A673 (cell line): ENCODE measurements at regions of chr6 and their contacts with region 1.

Region 1: DNA sequence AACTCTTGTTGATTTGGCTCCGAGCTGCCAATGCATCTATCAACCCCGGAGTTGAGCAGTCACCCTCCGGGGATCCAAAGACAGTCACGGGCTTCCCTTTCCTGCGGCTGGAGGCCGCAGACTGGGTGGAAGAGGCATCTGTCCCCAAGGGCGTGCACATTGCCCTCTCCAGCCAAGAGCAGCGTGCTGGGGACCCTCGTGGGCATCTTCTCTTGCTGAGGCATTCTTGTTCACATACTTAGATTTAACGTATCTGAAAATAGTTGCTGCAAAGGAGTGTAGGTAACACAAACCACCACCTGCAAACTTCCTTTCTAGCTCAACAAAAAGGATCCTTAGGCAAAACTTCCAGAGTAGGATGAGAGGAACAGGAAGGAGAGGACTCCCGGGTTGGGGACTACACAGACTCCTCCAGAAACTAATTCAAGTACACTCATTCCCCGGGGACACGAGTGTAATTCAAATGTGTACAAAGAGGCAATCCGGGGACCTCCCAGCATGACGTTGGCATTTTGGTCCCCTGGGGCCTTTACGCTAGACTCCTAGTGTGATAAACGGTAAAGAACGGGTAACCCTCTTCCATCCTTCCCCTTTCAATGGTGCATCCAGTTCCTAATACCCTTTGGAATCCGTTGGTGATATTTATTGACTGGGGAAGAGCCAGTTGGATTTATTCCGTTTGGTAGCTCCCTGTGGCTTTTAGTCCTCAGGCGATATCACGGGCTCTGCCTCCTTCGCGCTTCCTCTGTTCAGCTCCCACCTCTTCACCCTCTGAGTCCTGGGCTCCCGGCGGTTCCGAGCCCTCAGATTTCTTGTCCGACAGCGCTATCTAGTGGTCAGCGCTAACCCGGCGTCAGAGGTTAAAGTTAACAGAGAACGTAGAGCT is 2.7 kb upstream of the COL12A1 start:
- DNase-seq: peak; percentile 91
- H3K4me3 ChIP-seq: peak overlapping the region; percentile 16
- H3K27ac ChIP-seq: no peak overlapping the region
- H3K4me1 ChIP-seq: peaks cover 38% of the 10 kb centered on the region
- H3K27me3 ChIP-seq: peaks cover 22% of the 10 kb centered on the region
- CTCF ChIP-seq: peak; percentile 95

Region 2: GRCh38 chr6:73675466-73676098 is 1533.0 kb before region 1 on chr6:
- CTCF ChIA-PET with region 1: no interaction called
- POLR2A ChIA-PET with region 1: no interaction called
- intact Hi-C with region 1: loop called (anchors 10 kb)
- DNase-seq: peak; percentile 76
- H3K4me3 ChIP-seq: no peak overlapping the region
- H3K27ac ChIP-seq: no peak overlapping the region
- H3K4me1 ChIP-seq: no peaks in the 10 kb centered on the region
- H3K27me3 ChIP-seq: no peaks in the 10 kb centered on the region
- CTCF ChIP-seq: peak; percentile 88

Region 3: DNA sequence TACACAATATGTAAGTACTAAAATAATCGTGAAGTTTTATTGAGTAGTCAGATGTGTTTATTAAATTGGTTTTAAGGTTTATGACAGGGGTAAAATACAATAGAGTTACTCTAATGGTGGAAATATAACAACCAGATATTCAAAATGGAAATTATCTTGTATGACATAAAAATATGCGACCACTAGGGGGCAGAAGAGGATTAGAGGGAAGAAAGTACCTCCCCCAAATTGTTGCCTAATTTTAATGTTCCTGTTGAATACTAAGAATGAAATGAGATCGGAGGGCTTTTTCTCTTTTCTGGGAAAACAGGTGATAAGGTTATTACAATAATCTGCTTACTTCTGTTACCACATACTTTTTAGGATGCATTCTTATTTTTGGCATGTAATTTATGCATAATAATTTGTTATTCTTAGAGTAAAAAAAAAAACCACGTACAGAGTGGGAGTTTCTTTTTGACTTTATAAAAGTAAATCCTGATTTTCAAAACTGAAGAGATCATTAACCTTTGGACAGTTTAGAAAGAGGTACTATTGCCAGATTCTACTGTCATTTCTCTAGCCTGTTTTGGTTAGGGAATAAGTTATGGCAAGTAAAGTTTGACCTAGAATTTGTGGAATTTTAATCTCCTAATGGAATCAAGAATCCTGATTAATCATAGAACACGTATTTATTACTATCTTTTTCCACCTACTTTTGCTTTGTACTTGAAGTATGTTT is 1353.4 kb before region 1 on chr6:
- CTCF ChIA-PET with region 1: interaction called, 7 read pairs
- POLR2A ChIA-PET with region 1: no interaction called
- intact Hi-C with region 1: loop called (anchors 2 kb)
- DNase-seq: peak; percentile 83
- H3K4me3 ChIP-seq: no peak overlapping the region
- H3K27ac ChIP-seq: no peak overlapping the region
- H3K4me1 ChIP-seq: peaks cover 8% of the 10 kb centered on the region
- H3K27me3 ChIP-seq: no peaks in the 10 kb centered on the region
- CTCF ChIP-seq: peak; percentile 79

Region 4: GRCh38 chr6:74091136-74091793 is 1117.3 kb before region 1 on chr6:
- CTCF ChIA-PET with region 1: interaction called, 10 read pairs
- POLR2A ChIA-PET with region 1: no interaction called
- intact Hi-C with region 1: loop called (anchors 2 kb)
- DNase-seq: peak; percentile 75
- H3K4me3 ChIP-seq: no peak overlapping the region
- H3K27ac ChIP-seq: no peak overlapping the region
- H3K4me1 ChIP-seq: no peaks in the 10 kb centered on the region
- H3K27me3 ChIP-seq: no peaks in the 10 kb centered on the region
- CTCF ChIP-seq: peak; percentile 81

Region 5: GRCh38 chr6:74409447-74409846 is 799.1 kb before region 1 on chr6:
- CTCF ChIA-PET with region 1: interaction called, 4 read pairs
- POLR2A ChIA-PET with region 1: no interaction called
- intact Hi-C with region 1: loop called (anchors 2 kb)
- DNase-seq: peak; percentile 44
- H3K4me3 ChIP-seq: no peak overlapping the region
- H3K27ac ChIP-seq: no peak overlapping the region
- H3K4me1 ChIP-seq: no peaks in the 10 kb centered on the region
- H3K27me3 ChIP-seq: no peaks in the 10 kb centered on the region
- CTCF ChIP-seq: peak; percentile 51; the same call in 1 of the 2 replicates

Region 6: GRCh38 chr6:74557236-74557635 is 651.3 kb before region 1 on chr6:
- CTCF ChIA-PET with region 1: no interaction called
- POLR2A ChIA-PET with region 1: no interaction called
- intact Hi-C with region 1: no loop called
- DNase-seq: no peak
- H3K4me3 ChIP-seq: no peak overlapping the region
- H3K27ac ChIP-seq: no peak overlapping the region
- H3K4me1 ChIP-seq: no peaks in the 10 kb centered on the region
- H3K27me3 ChIP-seq: no peaks in the 10 kb centered on the region
- CTCF ChIP-seq: no peak

Region 7: GRCh38 chr6:74690365-74690764 is 518.2 kb before region 1 on chr6:
- CTCF ChIA-PET with region 1: no interaction called
- POLR2A ChIA-PET with region 1: no interaction called
- intact Hi-C with region 1: no loop called
- DNase-seq: no peak
- H3K4me3 ChIP-seq: no peak overlapping the region
- H3K27ac ChIP-seq: no peak overlapping the region
- H3K4me1 ChIP-seq: no peaks in the 10 kb centered on the region
- H3K27me3 ChIP-seq: no peaks in the 10 kb centered on the region
- CTCF ChIP-seq: no peak

Region 8: GRCh38 chr6:74749211-74750142 is 459.1 kb before region 1 on chr6:
- CTCF ChIA-PET with region 1: no interaction called
- POLR2A ChIA-PET with region 1: no interaction called
- intact Hi-C with region 1: loop called (anchors 10 kb)
- DNase-seq: no peak
- H3K4me3 ChIP-seq: no peak overlapping the region
- H3K27ac ChIP-seq: no peak overlapping the region
- H3K4me1 ChIP-seq: no peaks in the 10 kb centered on the region
- H3K27me3 ChIP-seq: no peaks in the 10 kb centered on the region
- CTCF ChIP-seq: no peak

Region 9: DNA sequence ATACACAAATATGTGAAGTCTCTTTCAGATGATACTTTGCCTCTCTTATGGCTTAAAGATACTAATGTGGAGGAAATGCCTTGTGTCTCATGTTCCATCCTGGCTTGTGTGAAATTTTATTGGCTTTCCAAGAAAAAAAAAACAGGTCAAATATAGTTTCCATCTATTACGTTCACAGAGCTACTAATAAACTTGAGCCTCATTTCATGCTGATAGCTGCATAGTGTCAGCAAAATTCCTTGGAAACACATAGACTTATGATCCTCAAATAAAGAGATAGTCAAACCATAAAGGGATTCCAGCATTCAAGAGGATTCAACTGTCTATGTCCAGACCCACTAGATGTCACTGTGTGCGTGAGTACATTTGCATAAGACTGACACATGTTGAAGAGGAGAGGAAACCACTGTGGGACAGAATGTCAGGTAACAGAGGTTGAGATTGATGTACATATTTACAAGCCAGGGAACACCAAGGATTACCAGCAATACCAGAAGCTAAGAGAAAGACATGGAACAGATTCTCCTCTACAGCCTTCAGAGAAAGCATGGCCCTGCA is 269.3 kb before region 1 on chr6:
- CTCF ChIA-PET with region 1: interaction called, 4 read pairs
- POLR2A ChIA-PET with region 1: no interaction called
- intact Hi-C with region 1: loop called (anchors 5 kb)
- DNase-seq: peak; percentile 26
- H3K4me3 ChIP-seq: no peak overlapping the region
- H3K27ac ChIP-seq: no peak overlapping the region
- H3K4me1 ChIP-seq: no peaks in the 10 kb centered on the region
- H3K27me3 ChIP-seq: no peaks in the 10 kb centered on the region
- CTCF ChIP-seq: peak; percentile 40; the same call in 1 of the 2 replicates

Region 10: DNA sequence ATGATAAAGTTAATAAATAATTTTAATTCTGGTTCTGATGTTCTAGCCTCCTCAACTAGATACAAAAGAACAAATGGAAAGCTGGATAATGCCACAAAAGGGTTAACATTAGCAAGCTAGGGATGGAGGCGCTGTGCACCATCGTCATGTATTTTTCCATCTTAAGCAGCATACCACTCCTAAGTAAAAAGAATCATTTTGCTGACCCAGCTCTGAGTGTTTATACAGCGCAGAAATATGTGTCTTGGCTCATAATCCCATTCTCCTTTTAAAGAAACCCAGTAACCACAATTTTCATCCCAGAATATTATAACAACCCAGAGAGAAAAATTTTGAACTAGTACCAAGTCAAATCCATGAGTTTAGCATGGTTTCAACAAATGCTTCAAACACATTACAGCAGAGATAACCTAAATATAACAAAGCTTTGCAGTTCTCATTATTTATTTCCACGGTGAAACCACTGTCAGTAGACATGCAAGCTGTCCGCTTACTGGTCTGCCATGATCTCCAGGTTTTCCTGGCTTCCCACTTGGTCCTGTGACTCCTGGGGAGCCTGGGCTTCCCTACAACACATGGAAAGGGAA is 113.8 kb before region 1 on chr6:
- CTCF ChIA-PET with region 1: no interaction called
- POLR2A ChIA-PET with region 1: no interaction called
- intact Hi-C with region 1: no loop called
- DNase-seq: no peak
- H3K4me3 ChIP-seq: no peak overlapping the region
- H3K27ac ChIP-seq: no peak overlapping the region
- H3K4me1 ChIP-seq: peaks cover 7% of the 10 kb centered on the region
- H3K27me3 ChIP-seq: no peaks in the 10 kb centered on the region
- CTCF ChIP-seq: no peak

Region 11: GRCh38 chr6:75266716-75267291 is 58.3 kb after region 1 on chr6:
- CTCF ChIA-PET with region 1: no interaction called
- POLR2A ChIA-PET with region 1: no interaction called
- intact Hi-C with region 1: no loop called
- DNase-seq: peak; percentile 73
- H3K4me3 ChIP-seq: no peak overlapping the region
- H3K27ac ChIP-seq: no peak overlapping the region
- H3K4me1 ChIP-seq: no peaks in the 10 kb centered on the region
- H3K27me3 ChIP-seq: no peaks in the 10 kb centered on the region
- CTCF ChIP-seq: peak; percentile 89